CD4-positive, alpha-beta memory T cell (primary cell): ENCODE measurements at regions of chr1 and their contacts with region 1.

Region 1: GRCh38 chr1:11037740-11038182 is 9.3 kb downstream of the MASP2 start:
- DNase-seq: peak; percentile 83 to 85 (median 85)
- H3K4me3 ChIP-seq: no peak overlapping the region
- H3K4me3 Mint-ChIP-seq: no peak overlapping the region
- H3K27ac ChIP-seq: no peak overlapping the region
- H3K27ac Mint-ChIP-seq: peak overlapping the region in 2 of 7 donors; percentile 23 to 47
- H3K4me1 ChIP-seq: peaks cover 7% of the 10 kb centered on the region
- H3K4me1 Mint-ChIP-seq: peaks cover 5 to 7% (median 6%) of the 10 kb centered on the region in 4 donors
- H3K27me3 ChIP-seq: no peaks in the 10 kb centered on the region
- H3K27me3 Mint-ChIP-seq: peaks cover 2 to 6% of the 10 kb centered on the region in 2 donors

Region 2: DNA sequence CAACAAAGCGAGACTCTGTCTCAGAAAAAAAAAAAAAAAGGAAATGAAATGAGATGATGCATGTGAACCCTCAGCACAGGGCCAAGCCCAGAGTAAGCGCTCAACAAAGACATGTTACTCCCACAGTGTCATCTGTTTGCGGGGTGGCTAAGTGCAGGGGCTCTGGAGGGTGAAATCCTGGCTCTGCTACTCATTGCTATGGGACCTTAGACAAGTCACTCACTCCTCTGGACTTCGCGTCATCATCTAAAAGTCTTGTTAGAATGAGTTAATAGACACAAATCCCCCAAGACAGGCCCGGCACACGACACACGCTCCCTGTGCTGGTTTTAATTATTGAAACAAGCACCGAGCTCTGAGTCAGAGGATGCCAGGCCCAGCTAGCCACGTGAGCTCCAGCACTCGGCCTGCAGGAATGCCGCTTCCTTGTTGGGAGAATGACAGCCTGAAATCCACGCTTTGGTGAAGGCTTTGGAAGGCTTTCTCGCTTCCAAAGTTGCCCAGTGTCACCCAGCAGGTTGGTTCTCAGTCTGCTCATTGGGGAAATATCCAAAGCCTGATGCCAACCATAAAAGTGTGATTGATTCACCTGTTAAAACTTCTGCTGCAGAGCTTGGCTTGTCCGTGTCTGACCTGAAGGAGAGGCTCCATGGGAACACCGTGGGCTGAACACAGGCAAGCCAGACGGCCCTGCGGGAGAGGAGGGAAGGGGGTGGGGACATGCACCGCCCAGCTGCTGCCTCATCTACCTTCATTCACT is 62.0 kb before region 1 on chr1:
- CTCF ChIA-PET with region 1: no interaction called
- POLR2A ChIA-PET with region 1: no interaction called
- intact Hi-C with region 1: no loop called
- DNase-seq: no peak
- H3K4me3 ChIP-seq: no peak overlapping the region
- H3K4me3 Mint-ChIP-seq: no peak overlapping the region
- H3K27ac ChIP-seq: no peak overlapping the region
- H3K27ac Mint-ChIP-seq: no peak overlapping the region
- H3K4me1 ChIP-seq: no peaks in the 10 kb centered on the region
- H3K4me1 Mint-ChIP-seq: peaks cover 0 to 4% (median 2%) of the 10 kb centered on the region in 4 donors
- H3K27me3 ChIP-seq: peaks cover 4% of the 10 kb centered on the region
- H3K27me3 Mint-ChIP-seq: peaks cover 8 to 11% of the 10 kb centered on the region in 2 donors

Region 3: DNA sequence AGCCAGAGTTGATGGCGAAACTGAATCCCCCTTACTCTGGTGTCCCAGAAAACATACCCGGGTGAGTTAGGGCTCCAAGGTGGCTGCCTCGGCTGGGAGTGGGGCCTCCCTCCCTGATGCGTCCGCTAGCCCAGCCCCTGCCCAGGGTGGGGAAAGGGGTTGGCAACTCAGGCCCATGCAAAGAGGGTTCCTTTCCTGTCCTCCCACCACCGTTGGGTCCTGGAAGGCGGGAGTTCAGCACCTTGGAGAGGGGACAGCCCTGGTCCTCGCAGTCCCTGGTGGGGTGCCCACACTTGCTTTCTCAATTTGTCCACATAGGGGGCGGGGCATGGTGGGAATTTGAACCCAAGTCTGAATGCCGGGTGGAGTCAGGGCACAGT is 16.0 kb after region 1 on chr1:
- CTCF ChIA-PET with region 1: interaction called, 17 read pairs
- POLR2A ChIA-PET with region 1: no interaction called
- intact Hi-C with region 1: no loop called
- DNase-seq: no peak
- H3K4me3 ChIP-seq: no peak overlapping the region
- H3K4me3 Mint-ChIP-seq: no peak overlapping the region
- H3K27ac ChIP-seq: no peak overlapping the region
- H3K27ac Mint-ChIP-seq: no peak overlapping the region
- H3K4me1 ChIP-seq: peaks cover 6% of the 10 kb centered on the region
- H3K4me1 Mint-ChIP-seq: peaks cover 0 to 22% (median 10%) of the 10 kb centered on the region in 4 donors
- H3K27me3 ChIP-seq: no peaks in the 10 kb centered on the region
- H3K27me3 Mint-ChIP-seq: no peaks in the 10 kb centered on the region

Region 4: DNA sequence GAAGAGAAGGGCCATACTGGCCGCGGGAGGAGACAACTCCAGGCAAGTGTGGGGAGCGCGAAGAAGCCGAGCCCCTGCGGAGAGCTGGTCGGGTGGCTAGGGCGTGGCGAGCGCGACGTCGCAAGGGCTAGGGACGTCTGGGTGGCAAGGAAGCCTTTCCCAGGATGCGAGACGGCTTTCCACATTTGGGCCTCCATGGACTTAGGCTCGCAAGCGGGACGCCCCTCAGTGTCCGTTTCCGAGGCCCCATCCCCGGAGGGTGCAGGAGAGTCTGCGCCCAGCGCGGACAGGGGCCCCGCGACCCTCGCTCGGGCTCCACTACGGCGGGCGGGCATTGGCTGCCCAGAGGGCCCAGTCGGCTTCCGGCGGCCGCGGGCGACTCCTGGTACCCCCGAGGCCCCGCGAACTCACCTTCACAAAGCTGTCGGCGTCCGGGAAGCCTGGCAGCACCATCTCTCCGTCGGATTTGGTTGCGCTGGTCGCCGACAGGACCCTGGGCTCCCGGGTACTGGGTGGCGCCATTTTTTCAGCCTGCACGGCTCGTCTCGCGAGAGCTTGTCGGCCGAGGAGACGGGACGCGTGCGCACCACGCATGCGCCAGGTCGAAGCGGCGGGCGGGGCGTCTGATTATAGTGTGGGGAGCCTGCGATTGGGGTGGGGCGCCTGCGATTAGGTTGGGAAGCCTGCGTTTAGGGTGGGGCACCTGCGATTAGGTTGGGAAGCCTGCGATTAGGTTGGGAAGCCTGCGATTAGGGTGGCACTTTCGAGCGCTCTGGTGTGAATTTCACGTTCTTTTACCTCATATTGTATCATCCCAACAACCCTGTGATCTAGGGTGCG is 61.8 kb after region 1 on chr1 and contains the start of gene EXOSC10:
- CTCF ChIA-PET with region 1: interaction called, 30 read pairs
- POLR2A ChIA-PET with region 1: interaction called, 3 read pairs
- intact Hi-C with region 1: no loop called
- DNase-seq: peak; percentile 93 to 95 (median 94)
- H3K4me3 ChIP-seq: peak within 1 kb of the TSS; percentile 93 to 96
- H3K4me3 Mint-ChIP-seq: peak within 1 kb of the TSS; percentile 92 to 98 (median 96)
- H3K27ac ChIP-seq: peak within 1 kb of the TSS; percentile 89
- H3K27ac Mint-ChIP-seq: peak within 1 kb of the TSS; percentile 89 to 97 (median 96)
- H3K4me1 ChIP-seq: peaks cover 18% of the 10 kb centered on the region
- H3K4me1 Mint-ChIP-seq: peaks cover 8 to 23% (median 12%) of the 10 kb centered on the region in 4 donors
- H3K27me3 ChIP-seq: no peaks in the 10 kb centered on the region
- H3K27me3 Mint-ChIP-seq: no peaks in the 10 kb centered on the region
- total RNA-seq, gene EXOSC10: 78.9 to 84.4 TPM

Region 5: GRCh38 chr1:11188381-11188780 is 150.6 kb after region 1 on chr1:
- CTCF ChIA-PET with region 1: interaction called, 13 read pairs
- POLR2A ChIA-PET with region 1: no interaction called
- intact Hi-C with region 1: no loop called
- DNase-seq: no peak
- H3K4me3 ChIP-seq: no peak overlapping the region
- H3K4me3 Mint-ChIP-seq: no peak overlapping the region
- H3K27ac ChIP-seq: no peak overlapping the region
- H3K27ac Mint-ChIP-seq: peak overlapping the region in 1 of 7 donors; percentile 13
- H3K4me1 ChIP-seq: no peaks in the 10 kb centered on the region
- H3K4me1 Mint-ChIP-seq: peaks cover 0 to 5% (median 0%) of the 10 kb centered on the region in 4 donors
- H3K27me3 ChIP-seq: no peaks in the 10 kb centered on the region
- H3K27me3 Mint-ChIP-seq: no peaks in the 10 kb centered on the region

Region 6: DNA sequence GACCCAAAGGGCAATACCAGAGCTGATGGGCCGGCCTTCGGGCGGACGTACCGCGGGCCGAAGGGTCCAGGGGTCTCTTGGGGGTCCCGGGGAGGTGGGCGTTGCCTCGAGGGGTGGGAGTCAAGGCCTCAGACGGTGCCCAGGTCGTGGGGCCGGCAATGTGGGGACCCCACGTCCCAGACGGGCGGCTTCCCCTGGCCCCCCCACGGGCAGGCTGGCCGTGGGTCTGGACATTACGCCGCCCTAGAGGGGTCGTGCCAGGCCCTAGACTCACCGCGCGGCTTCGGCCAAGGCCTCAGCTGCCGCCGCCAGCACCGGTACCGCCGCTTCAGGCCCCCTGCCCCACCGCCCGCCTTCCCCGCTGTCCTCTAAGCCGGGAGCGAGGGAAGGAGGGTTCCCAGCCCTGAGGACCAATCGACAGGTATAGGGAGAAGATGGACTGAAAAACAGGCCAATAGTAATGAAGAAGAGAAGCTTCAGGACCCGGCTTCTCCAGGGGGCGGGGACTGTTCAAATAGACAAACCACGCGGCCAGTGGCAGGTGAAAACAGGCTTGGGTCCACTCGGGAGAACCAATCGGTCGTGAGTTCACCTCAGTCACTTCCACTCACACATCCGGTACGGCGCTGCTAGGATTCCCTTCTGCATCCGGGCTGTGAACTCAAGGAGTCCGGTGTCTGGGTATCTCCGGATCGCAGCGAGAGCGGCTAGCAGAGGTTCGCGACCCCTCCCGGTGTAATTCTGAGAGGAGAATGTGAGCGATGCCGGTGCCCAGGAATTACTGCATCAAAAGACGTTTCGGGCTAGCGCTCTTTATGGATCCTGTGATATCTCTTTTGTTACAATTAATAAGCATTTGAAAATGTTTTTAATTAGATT is 224.6 kb after region 1 on chr1 and contains the start of gene MTOR:
- CTCF ChIA-PET with region 1: interaction called, 11 read pairs
- POLR2A ChIA-PET with region 1: no interaction called
- intact Hi-C with region 1: no loop called
- DNase-seq: peak; percentile 97 to 99 (median 99)
- H3K4me3 ChIP-seq: peak within 1 kb of the TSS; percentile 44 to 80
- H3K4me3 Mint-ChIP-seq: peak within 1 kb of the TSS; percentile 81 to 97 (median 91)
- H3K27ac ChIP-seq: peak within 1 kb of the TSS; percentile 91
- H3K27ac Mint-ChIP-seq: peak within 1 kb of the TSS; percentile 74 to 97 (median 93)
- H3K4me1 ChIP-seq: peaks cover 15% of the 10 kb centered on the region
- H3K4me1 Mint-ChIP-seq: peaks cover 13 to 30% (median 21%) of the 10 kb centered on the region in 4 donors
- H3K27me3 ChIP-seq: no peaks in the 10 kb centered on the region
- H3K27me3 Mint-ChIP-seq: no peaks in the 10 kb centered on the region
- total RNA-seq, gene MTOR: 41.4 to 46.8 TPM

Region 7: DNA sequence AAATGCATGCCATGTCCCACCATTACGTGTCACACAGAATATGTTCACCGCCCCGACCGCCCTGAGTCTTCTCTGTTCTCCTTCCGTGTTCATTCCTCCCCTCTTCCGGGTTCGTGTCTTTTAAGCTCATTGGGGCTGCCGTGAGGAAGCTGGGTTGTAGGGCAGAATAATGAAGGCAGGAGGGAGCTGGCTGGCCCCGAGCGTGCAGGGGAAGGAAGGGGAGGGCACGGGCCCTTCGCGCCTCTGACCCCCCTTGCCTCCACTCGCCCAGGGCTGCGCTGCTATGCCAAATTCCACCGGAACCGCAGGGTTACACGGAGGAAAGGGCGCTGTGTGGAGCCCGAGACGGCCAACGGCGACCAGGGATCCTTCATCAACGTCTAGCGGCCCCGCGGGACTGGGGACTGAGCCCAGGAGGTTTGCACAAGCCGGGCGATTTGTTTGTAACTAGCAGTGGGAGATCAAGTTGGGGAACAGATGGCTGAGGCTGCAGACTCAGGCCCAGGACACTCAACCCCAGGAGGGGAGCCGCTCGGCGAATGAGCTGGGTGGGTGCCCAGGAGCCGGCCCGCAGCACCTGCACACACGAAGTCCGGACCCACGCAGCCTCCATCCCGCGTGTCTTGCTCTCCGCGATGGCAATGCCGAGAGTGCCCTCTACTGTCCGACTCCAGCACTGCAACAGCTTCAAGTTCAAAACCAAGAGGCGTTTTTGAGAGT is 681.7 kb after region 1 on chr1:
- CTCF ChIA-PET with region 1: interaction called, 15 read pairs
- POLR2A ChIA-PET with region 1: interaction called, 3 read pairs
- intact Hi-C with region 1: loop called (anchors 1 kb)
- DNase-seq: peak; percentile 82 to 86 (median 84)
- H3K4me3 ChIP-seq: peak overlapping the region; percentile 33 to 51
- H3K4me3 Mint-ChIP-seq: peak overlapping the region; percentile 65 to 87 (median 81)
- H3K27ac ChIP-seq: peak overlapping the region; percentile 50
- H3K27ac Mint-ChIP-seq: peak overlapping the region; percentile 58 to 96 (median 91)
- H3K4me1 ChIP-seq: peaks cover 17% of the 10 kb centered on the region
- H3K4me1 Mint-ChIP-seq: peaks cover 7 to 17% (median 11%) of the 10 kb centered on the region in 4 donors
- H3K27me3 ChIP-seq: no peaks in the 10 kb centered on the region
- H3K27me3 Mint-ChIP-seq: no peaks in the 10 kb centered on the region